IMR-90 (cell line): ENCODE measurements at regions of chr18 and their contacts with region 1.

Region 1: DNA sequence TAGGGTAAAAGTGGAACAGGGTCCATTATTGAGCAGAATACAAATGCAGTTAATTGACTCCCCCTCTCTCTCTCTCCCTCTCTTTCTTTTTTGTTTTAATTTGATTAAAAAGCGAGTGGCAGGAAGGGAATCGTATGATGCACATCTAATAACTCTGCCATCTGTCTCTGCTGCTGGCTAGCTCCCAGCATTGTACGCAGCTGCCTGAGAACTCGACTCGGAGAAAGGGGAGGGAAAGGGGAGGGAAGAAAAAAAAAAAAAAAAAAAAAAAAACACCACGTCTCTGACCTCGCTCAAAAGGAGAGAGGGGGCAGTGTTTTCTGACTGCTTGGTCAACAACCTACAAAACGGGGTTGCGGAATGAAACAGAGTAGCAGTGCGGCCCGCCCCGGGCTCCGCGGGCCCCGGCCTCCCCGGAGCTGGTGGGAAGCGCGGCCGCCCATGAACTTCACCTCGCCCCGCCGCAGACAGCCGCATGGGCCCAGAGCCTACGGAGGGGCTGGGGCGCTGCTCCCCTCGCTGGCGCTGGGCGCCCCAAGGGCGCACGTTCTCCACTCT is 265.7 kb downstream of the TCF4 start:
- DNase-seq: peak; percentile 96
- ATAC-seq: peak; percentile 59
- H3K4me3 ChIP-seq: peak overlapping the region; percentile 61
- H3K27ac ChIP-seq: peak overlapping the region; percentile 82
- H3K4me1 ChIP-seq: peaks cover 3% of the 10 kb centered on the region; the same call in 1 of the 2 replicates
- H3K27me3 ChIP-seq: no peaks in the 10 kb centered on the region
- CTCF ChIP-seq: 0 out of 2 replicates have a peak, but pooled peaks have one; percentile 14
- POLR2A ChIP-seq: 0 out of 2 replicates have a peak, but pooled peaks have one; percentile 21
- RAD21 ChIP-seq: no peak

Region 2: GRCh38 chr18:55234366-55235093 is 87.7 kb before region 1 on chr18:
- CTCF ChIA-PET with region 1: interaction called, 6 read pairs
- POLR2A ChIA-PET with region 1: no interaction called
- dilution Hi-C with region 1: no loop called
- in situ Hi-C with region 1: no loop called
- intact Hi-C with region 1: loop called (anchors 2 kb)
- DNase-seq: peak; percentile 79
- ATAC-seq: peak; percentile 92
- H3K4me3 ChIP-seq: no peak overlapping the region
- H3K27ac ChIP-seq: no peak overlapping the region
- H3K4me1 ChIP-seq: no peaks in the 10 kb centered on the region
- H3K27me3 ChIP-seq: no peaks in the 10 kb centered on the region
- CTCF ChIP-seq: peak; percentile 88
- POLR2A ChIP-seq: no peak
- RAD21 ChIP-seq: peak; percentile 95

Region 3: GRCh38 chr18:55280503-55280902 is 41.8 kb before region 1 on chr18:
- CTCF ChIA-PET with region 1: no interaction called
- POLR2A ChIA-PET with region 1: no interaction called
- dilution Hi-C with region 1: no loop called
- in situ Hi-C with region 1: no loop called
- intact Hi-C with region 1: loop called (anchors 5 kb)
- DNase-seq: peak; percentile 42
- ATAC-seq: no peak
- H3K4me3 ChIP-seq: no peak overlapping the region
- H3K27ac ChIP-seq: no peak overlapping the region
- H3K4me1 ChIP-seq: no peaks in the 10 kb centered on the region
- H3K27me3 ChIP-seq: no peaks in the 10 kb centered on the region
- CTCF ChIP-seq: no peak
- POLR2A ChIP-seq: no peak
- RAD21 ChIP-seq: no peak

Region 4: DNA sequence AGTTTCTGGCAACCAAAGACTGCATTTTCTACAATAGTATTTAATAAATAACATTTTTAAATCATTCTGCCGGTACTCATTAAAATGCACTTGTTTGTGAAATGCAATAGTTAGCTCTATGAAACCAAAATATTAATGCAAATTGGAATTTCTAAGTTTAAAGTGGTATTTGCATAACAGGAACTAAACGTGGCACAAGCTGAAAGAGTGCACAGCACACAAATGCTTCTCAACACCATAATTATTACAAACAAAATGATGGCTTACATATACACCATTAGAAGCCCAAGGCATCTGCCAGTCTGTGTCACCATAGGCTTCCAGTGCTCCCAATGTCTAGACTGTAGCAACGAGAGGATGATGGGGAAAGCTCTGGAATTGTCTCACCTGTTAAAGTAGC is 14.8 kb before region 1 on chr18:
- CTCF ChIA-PET with region 1: no interaction called
- POLR2A ChIA-PET with region 1: interaction called, 17 read pairs
- dilution Hi-C with region 1: no loop called
- in situ Hi-C with region 1: no loop called
- intact Hi-C with region 1: no loop called
- DNase-seq: no peak
- ATAC-seq: no peak
- H3K4me3 ChIP-seq: no peak overlapping the region
- H3K27ac ChIP-seq: no peak overlapping the region
- H3K4me1 ChIP-seq: peaks cover 1% of the 10 kb centered on the region; the same call in 1 of the 2 replicates
- H3K27me3 ChIP-seq: no peaks in the 10 kb centered on the region
- CTCF ChIP-seq: no peak
- POLR2A ChIP-seq: no peak
- RAD21 ChIP-seq: no peak

Region 5: DNA sequence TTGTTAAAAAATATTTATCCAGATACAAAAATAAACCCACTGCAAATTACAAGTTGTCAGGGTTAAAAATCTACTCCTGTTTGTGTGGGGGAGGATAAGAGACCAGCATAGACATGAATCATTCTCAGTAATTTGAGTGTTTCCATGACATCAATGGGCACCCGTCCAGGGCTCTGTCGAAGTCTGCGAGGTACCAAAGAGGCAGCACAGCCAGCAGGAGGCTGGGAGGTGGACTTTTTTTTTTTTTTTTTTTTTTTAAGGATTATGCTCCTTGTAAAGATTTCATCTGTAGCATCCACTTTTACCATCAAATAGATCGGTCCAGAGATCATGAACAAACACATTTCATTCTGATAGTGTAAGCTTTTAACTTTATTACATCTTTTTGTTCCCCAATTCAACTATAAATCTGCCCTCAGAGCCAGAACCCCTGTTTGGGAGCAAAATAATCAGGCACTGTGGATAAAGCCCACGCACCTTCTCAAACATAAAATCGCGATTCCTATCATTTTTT is 83.7 kb after region 1 on chr18:
- CTCF ChIA-PET with region 1: interaction called, 5 read pairs
- POLR2A ChIA-PET with region 1: no interaction called
- dilution Hi-C with region 1: no loop called
- in situ Hi-C with region 1: no loop called
- intact Hi-C with region 1: loop called (anchors 2 kb)
- DNase-seq: peak; percentile 95
- ATAC-seq: peak; percentile 44
- H3K4me3 ChIP-seq: peak overlapping the region; percentile 9; the same call in 1 of the 2 replicates
- H3K27ac ChIP-seq: peak overlapping the region; percentile 32; the same call in 1 of the 2 replicates
- H3K4me1 ChIP-seq: peaks cover 7% of the 10 kb centered on the region
- H3K27me3 ChIP-seq: no peaks in the 10 kb centered on the region
- CTCF ChIP-seq: no peak
- POLR2A ChIP-seq: no peak
- RAD21 ChIP-seq: peak; percentile 21; the same call in 1 of the 2 replicates

Region 6: DNA sequence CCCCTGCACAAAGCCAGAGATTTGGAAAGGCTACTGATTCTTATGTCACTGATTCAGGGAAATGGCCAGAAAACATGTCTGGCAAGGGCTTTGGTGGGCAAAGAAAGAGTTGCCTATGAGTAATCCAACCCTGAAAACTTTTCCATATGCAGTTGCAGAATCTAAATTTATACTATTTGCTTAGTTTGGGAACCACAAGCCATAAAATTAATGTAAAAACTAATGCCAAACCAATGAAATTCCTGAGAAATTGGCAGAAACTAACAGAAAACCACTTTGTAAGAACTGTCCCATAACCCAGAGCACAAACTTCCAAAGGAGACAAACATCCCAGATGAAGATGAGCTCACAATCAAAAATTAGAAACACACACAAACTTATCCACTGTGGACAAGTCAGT is 217.0 kb after region 1 on chr18:
- CTCF ChIA-PET with region 1: no interaction called
- POLR2A ChIA-PET with region 1: no interaction called
- dilution Hi-C with region 1: no loop called
- in situ Hi-C with region 1: no loop called
- intact Hi-C with region 1: no loop called
- DNase-seq: peak; percentile 16
- ATAC-seq: no peak
- H3K4me3 ChIP-seq: no peak overlapping the region
- H3K27ac ChIP-seq: no peak overlapping the region
- H3K4me1 ChIP-seq: no peaks in the 10 kb centered on the region; the same call in 1 of the 2 replicates
- H3K27me3 ChIP-seq: no peaks in the 10 kb centered on the region
- CTCF ChIP-seq: no peak
- POLR2A ChIP-seq: no peak
- RAD21 ChIP-seq: no peak